SK-N-SH (cell line): ENCODE measurements at regions of chr11 and their contacts with region 1.

Region 1: GRCh38 chr11:127493330-127494022 is 492.9 kb upstream of the KIRREL3 start:
- DNase-seq: peak; percentile 34
- H3K4me3 ChIP-seq: peak overlapping the region in 1 of 2 experiments; percentile 17; a peak in 1 of 4 replicates
- H3K27ac ChIP-seq: no peak overlapping the region
- H3K4me1 ChIP-seq: no peaks in the 10 kb centered on the region
- H3K27me3 ChIP-seq: no peaks in the 10 kb centered on the region
- CTCF ChIP-seq: peak; percentile 47
- EP300 ChIP-seq: no peak
- RAD21 ChIP-seq: peak; percentile 67

Region 2: GRCh38 chr11:127461241-127462064 is 32.0 kb before region 1 on chr11:
- CTCF ChIA-PET with region 1: interaction called, 11 read pairs
- POLR2A ChIA-PET with region 1: no interaction called
- DNase-seq: peak; percentile 71
- H3K4me3 ChIP-seq: no peak overlapping the region
- H3K27ac ChIP-seq: peak overlapping the region in 1 of 2 experiments; percentile 60; a peak in 2 of 4 replicates
- H3K4me1 ChIP-seq: peaks cover 0 to 21% of the 10 kb centered on the region in 2 experiments; a peak in 2 of 4 replicates
- H3K27me3 ChIP-seq: no peaks in the 10 kb centered on the region
- CTCF ChIP-seq: no peak
- EP300 ChIP-seq: peak in 1 of 2 experiments; percentile 90; a peak in 2 of 4 replicates
- RAD21 ChIP-seq: peak; percentile 20

Region 3: DNA sequence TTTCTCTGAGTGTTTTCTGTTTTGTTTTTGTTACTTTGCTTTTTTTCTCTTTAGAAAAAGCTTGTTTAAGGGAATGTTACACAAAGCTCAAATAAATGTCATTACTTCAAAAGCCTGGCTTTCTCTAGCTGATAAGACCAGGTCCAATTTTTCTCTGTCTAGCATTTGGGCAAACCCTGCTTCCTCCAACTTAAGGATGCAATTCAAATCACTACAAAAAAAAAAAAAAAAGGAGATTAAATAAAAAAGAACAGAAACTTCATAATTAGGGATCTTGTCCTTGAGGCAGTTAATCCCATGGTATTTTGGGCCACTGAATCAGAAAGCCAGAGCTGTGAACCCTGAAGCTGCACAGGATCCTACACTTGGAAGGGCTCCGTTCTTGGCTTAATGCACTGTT is 12.1 kb before region 1 on chr11:
- CTCF ChIA-PET with region 1: interaction called, 14 read pairs
- POLR2A ChIA-PET with region 1: no interaction called
- DNase-seq: no peak
- H3K4me3 ChIP-seq: no peak overlapping the region
- H3K27ac ChIP-seq: no peak overlapping the region
- H3K4me1 ChIP-seq: no peaks in the 10 kb centered on the region
- H3K27me3 ChIP-seq: no peaks in the 10 kb centered on the region
- CTCF ChIP-seq: no peak
- EP300 ChIP-seq: no peak
- RAD21 ChIP-seq: no peak

Region 4: GRCh38 chr11:127506126-127506525 is 12.7 kb after region 1 on chr11:
- CTCF ChIA-PET with region 1: interaction called, 15 read pairs
- POLR2A ChIA-PET with region 1: no interaction called
- DNase-seq: no peak
- H3K4me3 ChIP-seq: no peak overlapping the region
- H3K27ac ChIP-seq: no peak overlapping the region
- H3K4me1 ChIP-seq: peaks cover 0 to 3% of the 10 kb centered on the region in 2 experiments; a peak in 1 of 4 replicates
- H3K27me3 ChIP-seq: no peaks in the 10 kb centered on the region
- CTCF ChIP-seq: no peak
- EP300 ChIP-seq: no peak
- RAD21 ChIP-seq: no peak